ENCODE measurements at regions of chr7 and their contacts with region 1.

Region 1: DNA sequence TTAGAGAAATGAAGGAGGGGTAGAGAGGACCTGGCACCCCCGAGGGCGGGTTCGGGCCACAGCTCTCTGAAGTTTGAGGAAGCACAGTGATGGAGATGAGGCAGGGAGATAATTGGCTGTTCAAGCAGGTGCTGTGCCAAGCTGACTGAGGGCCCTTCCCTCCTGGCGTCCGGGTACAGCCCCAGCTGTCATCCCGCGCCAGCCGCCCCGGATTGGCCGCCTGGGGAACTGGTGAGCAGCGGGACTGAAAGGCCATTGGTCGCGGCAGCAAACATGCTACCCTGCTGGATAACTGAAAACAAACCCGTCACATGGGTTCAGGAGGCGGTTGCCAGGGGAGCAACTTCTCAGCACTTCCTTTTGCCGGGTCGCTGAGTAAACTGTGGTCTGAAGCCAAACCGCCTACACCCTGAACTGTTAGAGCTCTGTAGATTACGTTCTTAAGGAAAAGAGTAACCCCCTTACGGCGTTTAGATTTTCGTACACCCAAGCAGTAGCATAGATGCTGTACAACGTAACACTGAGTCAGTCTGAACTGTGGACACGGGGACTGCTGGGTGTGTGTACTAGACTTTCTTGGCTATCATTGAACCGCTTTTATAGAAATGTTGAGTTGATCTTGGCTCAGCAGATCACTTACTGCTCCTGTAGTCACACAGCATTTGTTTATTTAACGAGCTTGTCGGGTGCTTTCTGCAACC is 1.3 kb downstream of the INSIG1 start:
- DNase-seq: peak; percentile 89 to 98 (median 96)
- ATAC-seq: peak; percentile 72 to 75
- H3K4me3 Mint-ChIP-seq: peak overlapping the region; percentile 86 to 96 (median 94)
- H3K27ac Mint-ChIP-seq: peak overlapping the region; percentile 89 to 99 (median 96)
- H3K4me1 Mint-ChIP-seq: peaks cover 22 to 49% (median 43%) of the 10 kb centered on the region in 4 donors
- H3K27me3 Mint-ChIP-seq: no peaks in the 10 kb centered on the region

Region 2: DNA sequence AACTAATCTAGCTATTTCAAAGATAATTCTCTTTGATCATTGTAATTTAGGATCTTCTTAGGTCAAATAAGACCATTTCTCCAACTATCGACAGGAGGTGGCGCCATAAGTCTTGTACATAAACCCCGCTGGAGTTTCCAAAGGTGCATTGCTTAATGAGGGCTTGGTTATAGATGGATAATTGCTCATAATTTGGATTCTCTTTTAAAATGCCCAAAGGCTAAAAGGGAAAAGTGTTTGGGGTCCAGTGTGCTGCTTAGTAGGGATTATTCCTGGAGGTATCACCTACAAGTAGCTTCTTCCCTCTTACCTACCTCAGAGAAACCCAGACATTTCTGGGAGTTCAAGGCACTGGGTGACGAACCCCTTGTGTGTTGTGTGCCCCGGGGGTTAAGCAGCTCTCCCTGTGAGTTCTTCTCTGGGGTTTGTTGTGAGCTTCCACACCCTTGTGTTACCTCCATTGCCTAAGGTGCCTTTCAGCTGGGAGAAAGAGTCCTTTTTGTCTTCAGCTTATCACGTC is 371.3 kb before region 1 on chr7:
- POLR2A ChIA-PET with region 1: interaction called, 11 read pairs
- DNase-seq: peak; percentile 50 to 90 (median 74)
- ATAC-seq: peak; percentile 64 to 70
- H3K4me3 Mint-ChIP-seq: peak overlapping the region; percentile 89 to 99 (median 95)
- H3K27ac Mint-ChIP-seq: peak overlapping the region; percentile 91 to 100 (median 99)
- H3K4me1 Mint-ChIP-seq: peaks cover 17 to 39% (median 36%) of the 10 kb centered on the region in 4 donors
- H3K27me3 Mint-ChIP-seq: peaks cover 0 to 2% (median under 1%) of the 10 kb centered on the region in 5 donors

Region 3: DNA sequence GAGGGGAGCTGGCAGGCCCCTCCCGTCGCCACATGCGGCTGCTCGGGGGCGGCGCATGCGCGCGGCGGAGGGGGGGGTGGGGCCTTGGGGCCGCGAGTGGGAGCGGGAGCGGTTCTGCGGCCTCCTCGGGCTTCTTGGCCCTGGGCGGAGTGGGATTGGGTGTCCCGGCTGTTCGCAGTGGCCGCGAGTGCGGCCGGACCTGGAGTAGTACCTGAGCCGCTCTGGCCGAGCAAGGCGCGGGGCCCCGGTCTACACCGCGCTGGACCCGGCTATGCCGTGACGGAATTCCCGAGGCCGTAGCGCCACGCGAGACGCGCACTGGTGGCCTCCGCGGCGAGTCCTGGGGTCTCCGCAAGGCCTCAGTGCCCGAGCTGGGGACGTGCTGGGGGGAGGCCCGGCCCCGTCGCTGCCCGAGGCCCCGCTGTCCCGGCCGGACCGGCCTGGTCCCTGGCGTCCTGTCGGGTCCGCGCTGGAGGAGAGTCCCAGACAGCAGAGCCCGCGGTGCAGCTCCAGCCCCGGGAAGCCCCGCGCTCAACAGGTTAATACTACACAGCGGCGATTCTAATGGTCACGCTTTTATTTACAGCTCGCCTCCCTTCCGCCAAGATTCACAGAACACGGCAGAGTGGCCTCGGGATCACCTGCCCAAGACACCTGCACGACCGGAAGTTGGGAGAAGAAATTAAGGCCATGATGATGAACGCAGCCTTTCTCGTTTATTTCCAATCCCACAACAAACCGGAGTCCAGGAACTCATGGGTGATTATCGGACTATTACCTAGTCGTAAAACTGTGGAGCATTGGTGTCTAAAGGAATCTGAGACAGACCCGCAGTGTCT is 295.4 kb before region 1 on chr7:
- POLR2A ChIA-PET with region 1: interaction called, 25 read pairs
- DNase-seq: peak; percentile 75 to 93 (median 88)
- ATAC-seq: peak; percentile 75 to 83
- H3K4me3 Mint-ChIP-seq: peak overlapping the region; percentile 83 to 97 (median 94)
- H3K27ac Mint-ChIP-seq: peak overlapping the region; percentile 74 to 97 (median 95)
- H3K4me1 Mint-ChIP-seq: peaks cover 5 to 20% (median 17%) of the 10 kb centered on the region in 4 donors
- H3K27me3 Mint-ChIP-seq: no peaks in the 10 kb centered on the region

Region 4: GRCh38 chr7:155205368-155206317 is 93.3 kb before region 1 on chr7:
- POLR2A ChIA-PET with region 1: interaction called, 61 read pairs
- DNase-seq: peak; percentile 51 to 88 (median 76)
- ATAC-seq: peak; percentile 92 to 93
- H3K4me3 Mint-ChIP-seq: peak overlapping the region; percentile 71 to 93 (median 81)
- H3K27ac Mint-ChIP-seq: peak overlapping the region; percentile 66 to 98 (median 85)
- H3K4me1 Mint-ChIP-seq: peaks cover 14 to 24% (median 21%) of the 10 kb centered on the region in 4 donors
- H3K27me3 Mint-ChIP-seq: peaks cover 0 to 14% (median 0%) of the 10 kb centered on the region in 5 donors

Region 5: DNA sequence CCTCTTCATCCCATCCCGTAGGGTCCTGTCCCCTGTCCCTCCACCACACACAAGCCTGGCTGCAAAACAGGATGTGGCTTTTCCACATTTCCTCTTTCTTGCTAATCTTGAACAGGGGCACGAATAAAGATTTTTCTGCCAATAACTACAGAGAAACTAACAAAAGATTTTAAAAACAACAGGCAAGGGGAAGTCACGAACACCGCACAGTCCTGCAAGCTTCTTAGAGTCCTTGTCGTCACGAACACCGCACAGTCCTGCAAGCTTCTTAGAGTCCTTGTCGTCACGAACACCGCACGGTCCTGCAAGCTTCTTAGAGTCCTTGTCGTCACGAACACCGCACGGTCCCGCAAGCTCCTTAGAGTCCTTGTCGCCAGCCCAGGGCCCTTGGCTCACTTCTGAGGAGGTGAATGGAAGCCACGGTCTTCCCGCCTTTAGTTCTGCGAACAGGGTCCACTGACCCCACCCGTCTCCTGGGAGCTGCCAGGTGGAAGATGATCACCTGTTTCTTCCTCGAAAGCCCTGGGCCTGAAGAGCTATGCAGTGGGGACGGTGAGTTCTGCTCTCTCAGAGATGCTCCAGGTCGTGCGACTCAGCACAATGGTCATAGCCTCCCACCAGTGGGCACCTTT is 11.6 kb before region 1 on chr7:
- POLR2A ChIA-PET with region 1: interaction called, 40 read pairs
- DNase-seq: no peak
- ATAC-seq: no peak
- H3K4me3 Mint-ChIP-seq: no peak overlapping the region
- H3K27ac Mint-ChIP-seq: peak overlapping the region in 4 of 10 donors; percentile 18 to 65 (median 36)
- H3K4me1 Mint-ChIP-seq: peaks cover 19 to 62% (median 27%) of the 10 kb centered on the region in 4 donors
- H3K27me3 Mint-ChIP-seq: peaks cover 0 to 7% (median 0%) of the 10 kb centered on the region in 5 donors

Region 6: DNA sequence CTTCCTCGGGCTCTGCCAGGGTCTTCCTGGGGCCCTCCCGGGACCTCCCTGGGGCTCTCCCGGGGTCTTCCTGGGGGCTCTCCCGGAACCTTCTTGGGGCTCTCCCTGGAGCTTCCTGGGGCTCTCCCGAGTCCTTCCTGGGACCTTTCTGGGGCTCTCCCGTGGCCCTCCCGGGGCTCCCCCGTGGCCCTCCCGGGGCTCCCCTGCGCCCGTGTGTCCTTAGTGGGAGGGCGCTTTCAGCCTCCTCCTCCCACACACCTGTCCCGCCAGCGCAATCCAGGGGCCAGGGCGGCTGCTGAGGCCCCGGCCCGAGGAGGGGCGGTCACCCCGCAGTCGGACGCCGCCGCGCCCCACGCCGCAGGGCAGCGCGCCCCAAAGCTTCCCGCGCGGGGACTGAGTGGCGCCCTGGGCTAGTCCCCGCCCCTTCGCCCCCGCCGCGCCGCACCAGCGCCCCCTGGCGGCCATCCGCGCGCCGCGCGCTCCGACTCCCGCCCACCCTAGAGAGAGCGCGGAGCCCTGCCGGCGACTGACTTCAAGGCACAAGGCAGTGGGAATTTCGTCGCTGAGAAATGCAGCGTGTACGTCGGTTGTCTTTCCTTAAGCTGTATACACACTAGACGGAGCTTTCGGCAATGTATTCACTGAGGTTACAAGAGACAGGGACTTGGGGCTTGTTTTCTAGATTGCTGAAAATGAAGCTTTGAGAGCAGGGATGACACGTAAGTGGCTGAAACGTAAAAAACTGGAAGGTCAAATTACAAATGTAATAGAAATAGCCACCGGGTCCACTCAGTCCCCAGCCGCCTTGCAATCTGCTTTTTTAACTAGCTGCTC is 45.8 kb after region 1 on chr7:
- POLR2A ChIA-PET with region 1: interaction called, 36 read pairs
- DNase-seq: peak; percentile 71 to 88 (median 84)
- ATAC-seq: peak; percentile 97 to 98
- H3K4me3 Mint-ChIP-seq: peak overlapping the region; percentile 44 to 80 (median 72)
- H3K27ac Mint-ChIP-seq: peak overlapping the region in 3 of 10 donors; percentile 10 to 33 (median 32)
- H3K4me1 Mint-ChIP-seq: peaks cover 2 to 9% (median 5%) of the 10 kb centered on the region in 4 donors
- H3K27me3 Mint-ChIP-seq: peaks cover 0 to 9% (median 0%) of the 10 kb centered on the region in 5 donors

Region 7: GRCh38 chr7:155356323-155357105 is 57.5 kb after region 1 on chr7:
- POLR2A ChIA-PET with region 1: no interaction called
- DNase-seq: peak in 1 of 10 donors; percentile 19
- ATAC-seq: no peak
- H3K4me3 Mint-ChIP-seq: no peak overlapping the region
- H3K27ac Mint-ChIP-seq: no peak overlapping the region
- H3K4me1 Mint-ChIP-seq: peaks cover 0 to 8% (median 1%) of the 10 kb centered on the region in 4 donors
- H3K27me3 Mint-ChIP-seq: peaks cover 4 to 64% (median 25%) of the 10 kb centered on the region in 5 donors